ENCODE measurements at regions of chr22 and their contacts with region 1.

Region 1: DNA sequence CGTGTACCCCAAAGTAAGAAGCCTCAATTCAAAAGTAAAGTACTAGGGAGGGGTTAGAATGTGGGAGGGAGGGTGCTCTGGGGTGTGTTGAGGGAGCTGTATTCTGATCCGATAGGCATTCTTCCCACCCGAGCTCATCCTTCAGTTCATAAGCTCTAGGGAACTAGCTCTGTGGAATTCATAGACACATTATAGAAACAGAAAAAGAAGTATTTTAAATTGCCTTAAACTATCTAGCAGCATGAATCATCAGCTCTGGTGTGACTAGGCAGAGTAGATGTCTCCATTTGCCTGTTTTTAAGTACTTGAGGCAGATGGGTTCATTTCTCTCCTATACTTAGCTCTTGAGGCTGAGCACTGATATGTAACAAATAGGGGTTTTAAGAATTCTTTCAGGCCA is 7.3 kb upstream of the SGSM3 start:
- DNase-seq: no peak
- ATAC-seq: no peak
- H3K4me3 ChIP-seq: no peak overlapping the region
- H3K4me3 Mint-ChIP-seq: no peak overlapping the region
- H3K27ac ChIP-seq: no peak overlapping the region
- H3K27ac Mint-ChIP-seq: no peak overlapping the region
- H3K4me1 ChIP-seq: no peaks in the 10 kb centered on the region
- H3K4me1 Mint-ChIP-seq: no peaks in the 10 kb centered on the region
- H3K27me3 ChIP-seq: no peaks in the 10 kb centered on the region
- H3K27me3 Mint-ChIP-seq: no peaks in the 10 kb centered on the region
- CTCF ChIP-seq: no peak

Region 2: DNA sequence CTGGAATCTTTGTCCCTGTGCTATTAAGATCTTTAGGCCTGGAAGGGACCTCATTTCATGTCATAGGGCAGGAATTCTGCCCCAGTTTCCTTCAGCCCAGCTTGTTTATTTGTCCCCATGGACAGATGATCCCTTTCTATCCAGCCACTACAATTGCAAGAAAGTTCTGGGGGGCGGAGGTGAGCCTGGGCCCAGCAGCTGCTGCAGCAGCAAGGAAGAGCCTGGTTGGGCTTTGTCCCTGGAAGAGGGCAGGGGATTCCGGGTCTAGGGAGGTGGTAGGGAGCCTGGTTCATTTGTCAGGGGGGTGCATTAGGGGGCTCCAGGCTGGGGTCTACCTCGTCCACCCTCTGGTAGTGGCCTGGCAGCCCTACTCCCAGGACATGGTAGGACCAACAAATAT is 808.9 kb before region 1 on chr22:
- CTCF ChIA-PET with region 1: no interaction called
- POLR2A ChIA-PET with region 1: no interaction called
- intact Hi-C with region 1: loop called in 1 of 2 experiments (anchors 5 kb)
- DNase-seq: no peak
- ATAC-seq: no peak
- H3K4me3 ChIP-seq: no peak overlapping the region
- H3K4me3 Mint-ChIP-seq: no peak overlapping the region
- H3K27ac ChIP-seq: no peak overlapping the region
- H3K27ac Mint-ChIP-seq: no peak overlapping the region
- H3K4me1 ChIP-seq: peaks cover 10% of the 10 kb centered on the region
- H3K4me1 Mint-ChIP-seq: peaks cover 6% of the 10 kb centered on the region
- H3K27me3 ChIP-seq: peaks cover 17 to 18% of the 10 kb centered on the region in 2 experiments
- H3K27me3 Mint-ChIP-seq: peaks cover 43% of the 10 kb centered on the region
- CTCF ChIP-seq: no peak

Region 3: DNA sequence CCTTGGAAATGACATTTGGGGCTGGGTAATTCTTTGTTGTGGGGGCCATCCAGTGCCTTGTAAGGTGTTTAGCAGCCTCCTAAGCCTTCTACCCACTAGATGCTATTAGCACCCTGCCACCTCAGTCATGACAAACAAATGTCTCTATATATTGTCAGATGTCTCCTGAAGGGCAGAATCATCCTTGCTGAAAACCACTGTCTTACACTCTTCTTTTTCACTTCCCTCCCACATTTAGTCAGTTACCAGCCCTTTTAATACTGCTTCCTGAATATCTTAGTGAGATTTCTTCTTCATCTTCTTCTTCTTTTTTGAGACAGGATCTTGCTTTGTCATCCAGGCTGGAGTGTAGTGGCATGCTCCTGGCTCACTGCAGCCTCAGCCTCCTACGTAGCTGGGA is 152.2 kb before region 1 on chr22:
- CTCF ChIA-PET with region 1: no interaction called
- POLR2A ChIA-PET with region 1: no interaction called
- intact Hi-C with region 1: no loop called
- DNase-seq: peak in 1 of 9 experiments; percentile 26
- ATAC-seq: peak; percentile 51
- H3K4me3 ChIP-seq: no peak overlapping the region
- H3K4me3 Mint-ChIP-seq: peak overlapping the region; percentile 1
- H3K27ac ChIP-seq: peak overlapping the region in 1 of 2 experiments; percentile 8
- H3K27ac Mint-ChIP-seq: peak overlapping the region; percentile 83
- H3K4me1 ChIP-seq: peaks cover 59% of the 10 kb centered on the region
- H3K4me1 Mint-ChIP-seq: peaks cover 76% of the 10 kb centered on the region
- H3K27me3 ChIP-seq: no peaks in the 10 kb centered on the region
- H3K27me3 Mint-ChIP-seq: no peaks in the 10 kb centered on the region
- CTCF ChIP-seq: no peak